ENCODE measurements at regions of chr1 and their contacts with region 1.

Region 1: DNA sequence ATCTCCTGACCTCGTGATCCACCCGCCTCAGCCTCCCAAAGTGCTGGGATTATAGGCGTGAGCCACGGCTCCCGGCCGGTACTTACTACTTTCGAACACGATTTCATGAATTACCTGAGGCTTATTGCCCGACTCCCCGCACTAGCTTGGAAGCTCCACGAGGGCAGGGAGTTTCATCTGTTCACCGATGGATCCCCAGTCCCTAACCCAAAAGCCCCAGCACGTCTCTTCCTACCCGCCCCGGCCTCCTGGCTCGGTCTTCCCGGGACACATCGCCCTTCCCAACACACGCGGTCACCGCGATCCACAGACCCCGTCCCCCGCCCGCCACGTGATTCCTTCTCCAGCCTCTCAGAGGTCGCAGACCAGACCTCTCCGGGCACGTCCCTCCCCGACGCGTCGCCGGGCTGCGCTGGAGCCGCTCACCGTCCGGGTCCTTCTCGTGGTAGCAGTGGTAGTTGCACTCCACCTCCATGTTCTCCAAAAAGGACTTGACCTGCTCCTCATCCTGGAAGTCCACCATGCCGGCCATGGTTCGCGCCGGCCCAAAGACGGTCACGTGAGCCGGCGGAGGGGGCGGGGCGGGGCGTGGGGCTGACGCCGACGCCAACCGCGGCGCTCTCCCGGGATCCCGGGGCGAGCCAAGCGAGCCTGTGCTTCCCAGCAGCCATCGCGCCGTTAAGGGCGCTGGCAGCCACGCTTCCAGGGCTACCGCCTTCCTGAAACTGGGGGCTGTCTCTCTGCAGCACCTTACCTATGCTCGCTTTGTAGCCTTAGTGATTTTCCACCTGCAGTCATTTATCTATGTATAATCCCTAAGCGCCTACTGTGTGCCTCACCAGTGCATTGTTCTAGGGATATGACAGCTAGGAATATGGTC is at the start of gene COA7:
- DNase-seq: peak; percentile 86 to 91
- ATAC-seq: peak; percentile 90 to 94 (median 92)
- H3K4me3 ChIP-seq: peak within 1 kb of the TSS; percentile 54 to 86 (median 72)
- H3K27ac ChIP-seq: peak within 1 kb of the TSS; percentile 73 to 90 (median 83)
- H3K4me1 ChIP-seq: peaks cover 0 to 29% (median 6%) of the 10 kb centered on the region in 9 donors
- H3K27me3 ChIP-seq: no peaks in the 10 kb centered on the region
- CTCF ChIP-seq: peak in 2 of 9 donors; percentile 6
- total RNA-seq, gene COA7: 9.7 to 22.4 (median 16.0) TPM

Region 2: DNA sequence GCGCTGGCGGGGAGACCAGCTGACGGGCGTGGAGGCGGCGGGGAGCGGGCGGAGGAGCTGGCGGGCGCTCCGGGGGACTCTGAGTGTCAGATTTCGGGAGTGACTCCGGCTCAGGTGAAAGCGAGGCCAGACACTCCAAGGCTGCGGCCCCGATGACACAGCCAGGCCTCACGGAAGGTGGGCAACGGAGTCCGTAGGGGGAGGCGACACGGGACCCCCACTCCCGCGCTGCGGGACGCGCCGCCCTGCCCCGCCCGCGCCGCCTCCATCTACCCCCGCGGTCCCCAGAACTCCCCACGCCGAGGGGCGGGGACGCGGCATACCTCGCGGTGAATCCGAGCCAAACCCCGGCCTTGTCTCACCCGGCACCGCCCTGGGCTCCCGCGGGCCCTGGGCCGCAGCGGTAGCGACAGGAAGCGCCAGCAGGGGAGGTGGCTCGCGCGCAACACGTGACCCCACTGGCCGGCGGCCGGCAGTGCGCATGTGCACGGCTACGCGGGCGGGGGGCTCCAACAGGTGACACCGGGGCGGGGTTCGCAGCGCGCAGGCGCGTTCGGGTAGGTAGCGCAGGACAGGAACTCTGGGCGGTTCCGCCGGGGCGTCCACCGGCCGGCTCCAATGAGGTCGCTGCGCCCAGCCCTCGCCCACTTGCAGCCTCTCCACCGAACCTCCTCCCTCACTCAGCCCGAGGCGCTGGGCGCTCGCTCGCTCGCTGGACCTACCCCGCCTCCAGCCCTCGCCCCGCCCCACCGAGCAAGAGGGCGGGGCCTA is 332.1 kb before region 1 on chr1 and contains the start of gene CC2D1B:
- intact Hi-C with region 1: no loop called
- DNase-seq: peak; percentile 97 to 99
- ATAC-seq: peak; percentile 95 to 98 (median 97)
- H3K4me3 ChIP-seq: peak within 1 kb of the TSS; percentile 48 to 98 (median 85)
- H3K27ac ChIP-seq: peak within 1 kb of the TSS; percentile 46 to 99 (median 90)
- H3K4me1 ChIP-seq: peaks cover 0 to 26% (median 12%) of the 10 kb centered on the region in 9 donors
- H3K27me3 ChIP-seq: peaks cover 0 to 10% (median 0%) of the 10 kb centered on the region in 7 donors
- CTCF ChIP-seq: peak in 5 of 9 donors; percentile 22 to 48 (median 29)
- total RNA-seq, gene CC2D1B: 14.4 to 19.9 (median 17.2) TPM

Region 3: DNA sequence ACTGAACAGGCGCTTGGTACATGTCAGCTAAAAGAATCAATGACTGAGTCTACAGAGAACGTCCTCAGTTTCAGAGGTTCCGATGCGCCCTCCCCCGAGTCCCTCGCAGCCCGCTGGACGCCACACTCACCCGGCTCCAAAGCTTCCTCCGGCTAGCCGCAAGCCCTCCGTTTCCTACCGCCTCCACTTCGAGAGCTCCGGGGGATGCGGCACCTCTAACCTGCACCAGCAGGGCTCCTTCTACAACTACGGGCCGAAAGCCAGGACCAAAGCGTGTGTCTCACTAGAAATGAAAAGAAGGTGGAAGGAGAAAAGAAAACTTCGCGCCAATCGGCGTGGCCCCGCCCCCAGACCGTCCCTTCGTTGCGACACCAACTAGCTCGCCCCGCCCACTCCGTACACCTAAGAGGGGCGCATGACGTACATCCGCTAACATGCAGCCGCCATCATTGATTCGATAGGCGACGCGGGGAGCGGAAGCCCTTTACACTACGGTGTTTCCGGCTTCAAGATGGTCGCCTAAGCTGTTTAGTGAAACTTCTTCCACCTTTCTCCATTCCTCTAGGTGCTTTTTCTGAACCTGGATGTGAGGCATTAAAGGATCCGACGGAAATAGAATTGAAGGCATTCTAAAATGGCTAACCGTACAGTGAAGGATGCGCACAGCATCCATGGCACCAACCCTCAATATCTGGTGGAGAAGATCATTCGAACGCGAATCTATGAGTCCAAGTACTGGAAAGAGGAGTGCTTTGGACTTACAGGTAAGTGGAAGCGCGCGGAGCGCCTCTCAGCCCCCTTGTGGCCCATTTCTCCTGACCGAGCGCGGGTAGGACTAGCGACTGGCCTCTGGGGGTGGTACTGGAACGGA is 293.7 kb before region 1 on chr1 and contains the starts of genes ORC1 and PRPF38A:
- intact Hi-C with region 1: loop called in 1 of 10 experiments (anchors 10 kb)
- DNase-seq: peak; percentile 95 to 98
- ATAC-seq: peak; percentile 99 to 100 (median 100)
- H3K4me3 ChIP-seq: peak within 1 kb of the TSS; percentile 64 to 95 (median 86)
- H3K27ac ChIP-seq: peak within 1 kb of the TSS; percentile 5 to 93 (median 88)
- H3K4me1 ChIP-seq: peaks cover 7 to 34% (median 21%) of the 10 kb centered on the region in 9 donors
- H3K27me3 ChIP-seq: no peaks in the 10 kb centered on the region
- CTCF ChIP-seq: peak in 7 of 9 donors; percentile 19 to 62 (median 52)
- total RNA-seq, gene ORC1: 0.08 to 0.90 (median 0.20) TPM in 8 of 10 donors, not detected in the others
- total RNA-seq, gene PRPF38A: 16.7 to 20.8 (median 18.8) TPM

Region 4: GRCh38 chr1:52726265-52727113 is 28.5 kb after region 1 on chr1 and contains the start of gene ZYG11B:
- intact Hi-C with region 1: loop called in 1 of 10 experiments (anchors 2 kb)
- DNase-seq: peak; percentile 91 to 93
- ATAC-seq: peak; percentile 92 to 99 (median 98)
- H3K4me3 ChIP-seq: peak within 1 kb of the TSS; percentile 75 to 94 (median 91)
- H3K27ac ChIP-seq: peak within 1 kb of the TSS; percentile 72 to 96 (median 93)
- H3K4me1 ChIP-seq: peaks cover 7 to 41% (median 21%) of the 10 kb centered on the region in 9 donors
- H3K27me3 ChIP-seq: no peaks in the 10 kb centered on the region
- CTCF ChIP-seq: peak in 1 of 9 donors; percentile 13
- total RNA-seq, gene ZYG11B: 48.6 to 84.3 (median 66.3) TPM

Region 5: DNA sequence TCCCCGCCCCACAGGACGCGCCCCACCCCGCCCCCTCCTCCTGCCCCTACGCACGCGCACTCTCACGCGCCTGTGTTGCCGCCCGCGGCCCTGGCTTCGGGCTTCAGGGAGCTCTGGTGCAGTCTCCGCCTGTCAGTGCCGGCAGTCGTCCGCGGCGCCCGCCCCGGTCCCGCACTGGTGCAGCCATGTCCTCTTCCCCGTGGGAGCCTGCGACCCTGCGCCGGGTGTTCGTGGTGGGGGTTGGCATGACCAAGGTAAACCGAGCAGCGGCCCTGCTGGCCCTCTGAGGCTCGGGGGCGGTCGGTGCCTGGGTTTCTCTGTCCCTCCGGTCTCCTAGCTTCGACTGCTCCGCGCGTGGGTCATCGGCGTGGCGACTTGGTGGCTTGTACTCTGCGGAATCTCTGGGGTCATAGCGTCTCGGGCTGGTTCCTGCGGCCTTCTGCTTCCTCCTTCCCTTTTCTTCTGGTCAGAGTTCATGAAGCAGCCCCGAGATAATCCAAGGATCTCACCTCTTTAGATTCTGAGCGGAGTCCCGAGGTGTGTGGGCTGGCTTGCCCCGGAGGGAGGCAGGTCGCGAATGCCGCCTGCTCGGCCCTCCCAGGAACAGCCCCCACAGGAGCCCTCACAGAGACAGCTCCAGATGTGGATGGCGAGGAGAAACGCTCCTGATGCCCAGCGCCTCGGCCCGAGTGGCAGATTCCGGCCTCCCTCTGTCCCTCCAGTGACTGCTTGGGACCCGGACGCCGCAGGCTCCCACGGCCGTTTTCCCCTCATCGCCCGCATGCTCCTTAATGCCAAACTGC is 229.4 kb after region 1 on chr1 and contains the start of gene SCP2:
- intact Hi-C with region 1: loop called in 2 of 10 experiments (anchors 5 to 10 kb)
- DNase-seq: peak; percentile 86 to 90
- ATAC-seq: peak; percentile 94 to 97 (median 96)
- H3K4me3 ChIP-seq: peak within 1 kb of the TSS; percentile 55 to 85 (median 78)
- H3K27ac ChIP-seq: peak within 1 kb of the TSS; percentile 76 to 90 (median 87)
- H3K4me1 ChIP-seq: peaks cover 5 to 30% (median 23%) of the 10 kb centered on the region in 9 donors
- H3K27me3 ChIP-seq: peaks cover 0 to 2% (median 0%) of the 10 kb centered on the region in 7 donors
- CTCF ChIP-seq: no peak
- total RNA-seq, gene SCP2: 117 to 149 (median 133) TPM

Region 6: DNA sequence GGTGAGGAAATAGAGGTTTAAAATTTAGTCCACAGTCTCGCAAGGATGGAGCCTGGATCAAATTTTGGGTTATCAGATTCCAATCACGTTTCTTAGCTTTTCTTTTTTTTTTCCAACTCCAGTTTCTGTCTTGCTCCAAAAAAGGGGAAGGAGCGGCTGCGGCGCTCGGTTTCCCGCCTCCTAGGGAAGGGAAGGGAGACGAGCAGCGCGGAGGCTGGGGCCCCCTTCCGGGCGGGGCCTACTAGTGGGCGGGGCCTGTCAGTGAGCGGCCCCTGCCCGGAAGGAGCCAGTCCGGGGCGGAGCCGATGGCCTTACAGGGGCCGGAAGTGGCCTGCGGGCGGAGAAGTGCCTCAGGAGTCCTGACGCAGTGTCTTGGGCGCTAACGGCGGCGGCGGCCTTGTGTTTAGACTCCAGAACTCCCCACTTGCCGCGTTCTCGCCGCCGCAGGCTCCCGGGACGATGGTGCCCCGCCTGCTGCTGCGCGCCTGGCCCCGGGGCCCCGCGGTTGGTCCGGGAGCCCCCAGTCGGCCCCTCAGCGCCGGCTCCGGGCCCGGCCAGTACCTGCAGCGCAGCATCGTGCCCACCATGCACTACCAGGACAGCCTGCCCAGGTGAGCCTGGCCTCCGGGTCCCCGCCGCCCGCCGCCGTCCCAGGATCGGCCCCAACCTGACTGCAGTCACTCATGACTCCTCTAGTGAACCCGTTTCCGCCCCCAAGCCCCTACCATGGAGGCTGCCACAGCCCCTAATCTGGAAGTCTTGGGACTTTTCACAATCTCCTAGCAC is 498.6 kb after region 1 on chr1 and contains the start of gene CPT2:
- intact Hi-C with region 1: loop called in 3 of 10 experiments (anchors 10 kb)
- DNase-seq: peak; percentile 93 to 96
- ATAC-seq: peak; percentile 97 to 99 (median 98)
- H3K4me3 ChIP-seq: peak within 1 kb of the TSS; percentile 64 to 95 (median 88)
- H3K27ac ChIP-seq: peak within 1 kb of the TSS; percentile 86 to 99 (median 98)
- H3K4me1 ChIP-seq: peaks cover 3 to 41% (median 34%) of the 10 kb centered on the region in 9 donors
- H3K27me3 ChIP-seq: no peaks in the 10 kb centered on the region
- CTCF ChIP-seq: peak in 3 of 9 donors; percentile 16 to 35 (median 27)
- total RNA-seq, gene CPT2: 29.3 to 48.7 (median 37.5) TPM

Measured in heart right ventricle (tissue), 16 donors.